Aorta (tissue), 5 donors: ENCODE measurements at regions of chr12 and their contacts with region 1.

Region 1: DNA sequence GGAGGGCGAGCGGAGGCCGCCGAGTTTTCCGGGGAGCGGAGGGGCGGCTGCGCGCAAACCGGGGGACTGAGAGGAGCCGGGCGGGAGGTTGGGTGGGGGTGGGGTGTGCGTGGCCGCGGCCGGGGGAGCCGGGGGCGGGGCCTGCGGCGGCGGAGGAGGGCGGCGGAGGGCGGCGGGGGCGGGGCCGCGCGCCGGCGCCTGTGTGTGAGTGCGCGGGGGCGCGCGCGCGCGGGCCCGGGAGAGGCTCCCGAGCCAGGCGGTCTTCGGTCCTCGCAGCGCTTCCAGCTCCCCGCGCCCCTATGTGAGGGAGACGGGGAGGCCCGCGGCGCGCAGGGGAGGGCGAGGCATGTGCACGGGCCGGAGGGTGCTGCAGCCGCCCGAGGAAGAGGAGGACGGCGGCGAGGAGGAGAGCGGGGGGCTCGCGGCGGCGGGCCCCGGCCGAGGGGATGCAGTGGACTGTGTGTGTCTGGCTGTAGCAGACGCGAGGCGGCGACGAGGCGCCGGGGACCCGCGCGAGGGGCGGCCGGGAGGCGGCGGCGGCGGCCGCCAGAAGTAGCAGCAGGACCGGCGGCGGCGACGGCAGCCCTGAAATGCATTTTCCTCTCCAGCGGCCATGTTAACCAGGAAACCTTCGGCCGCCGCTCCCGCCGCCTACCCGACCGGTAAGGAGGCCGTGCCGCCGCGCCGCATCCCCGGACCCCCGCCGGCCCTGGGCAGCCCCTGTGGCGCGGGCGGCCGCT is at the start of gene DYRK2:
- DNase-seq: peak; percentile 89 to 92
- ATAC-seq: peak; percentile 86
- H3K4me3 ChIP-seq: peak within 1 kb of the TSS; percentile 89 to 98
- H3K27ac ChIP-seq: peak within 1 kb of the TSS; percentile 69 to 93
- H3K4me1 ChIP-seq: no peaks in the 10 kb centered on the region
- H3K27me3 ChIP-seq: no peaks in the 10 kb centered on the region
- total RNA-seq, gene DYRK2: 26.7 to 42.5 TPM

Region 2: DNA sequence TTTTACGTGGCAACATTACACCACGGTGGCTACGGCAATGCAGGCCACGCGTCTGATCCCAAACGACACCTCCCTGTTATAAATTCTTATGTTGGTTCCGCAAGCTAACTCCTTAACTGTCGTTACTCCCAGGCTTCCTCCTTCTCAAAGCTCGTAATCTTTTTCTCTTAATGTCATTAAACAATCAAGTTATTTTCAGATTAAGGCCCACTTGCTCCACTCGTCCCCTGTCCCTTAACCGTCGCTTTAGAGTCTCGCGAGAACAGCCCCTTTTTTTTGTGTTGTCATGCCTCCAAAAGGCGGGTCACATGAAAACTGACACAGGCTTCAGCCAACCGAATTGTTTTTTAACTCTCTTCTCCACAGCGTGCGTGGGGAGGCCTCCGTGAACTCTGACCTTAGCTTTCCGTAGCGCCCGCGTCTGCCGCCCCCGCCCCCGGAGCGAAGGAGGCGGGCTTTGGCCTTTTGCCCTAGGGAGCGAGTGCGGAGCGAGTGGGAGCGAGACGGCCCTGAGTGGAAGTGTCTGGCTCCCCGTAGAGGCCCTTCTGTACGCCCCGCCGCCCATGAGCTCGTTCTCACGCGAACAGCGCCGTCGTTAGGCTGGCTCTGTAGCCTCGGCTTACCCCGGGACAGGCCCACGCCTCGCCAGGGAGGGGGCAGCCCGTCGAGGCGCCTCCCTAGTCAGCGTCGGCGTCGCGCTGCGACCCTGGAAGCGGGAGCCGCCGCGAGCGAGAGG is 379.6 kb before region 1 on chr12 and contains the start of gene CAND1:
- intact Hi-C with region 1: loop called (anchors 5 to 10 kb)
- DNase-seq: peak; percentile 98
- ATAC-seq: peak; percentile 97
- H3K4me3 ChIP-seq: peak within 1 kb of the TSS; percentile 64 to 91
- H3K27ac ChIP-seq: peak within 1 kb of the TSS; percentile 83 to 95
- H3K4me1 ChIP-seq: peaks cover 0 to 3% of the 10 kb centered on the region in 2 donors
- H3K27me3 ChIP-seq: no peaks in the 10 kb centered on the region
- total RNA-seq, gene CAND1: 88.7 to 113 TPM

Region 3: DNA sequence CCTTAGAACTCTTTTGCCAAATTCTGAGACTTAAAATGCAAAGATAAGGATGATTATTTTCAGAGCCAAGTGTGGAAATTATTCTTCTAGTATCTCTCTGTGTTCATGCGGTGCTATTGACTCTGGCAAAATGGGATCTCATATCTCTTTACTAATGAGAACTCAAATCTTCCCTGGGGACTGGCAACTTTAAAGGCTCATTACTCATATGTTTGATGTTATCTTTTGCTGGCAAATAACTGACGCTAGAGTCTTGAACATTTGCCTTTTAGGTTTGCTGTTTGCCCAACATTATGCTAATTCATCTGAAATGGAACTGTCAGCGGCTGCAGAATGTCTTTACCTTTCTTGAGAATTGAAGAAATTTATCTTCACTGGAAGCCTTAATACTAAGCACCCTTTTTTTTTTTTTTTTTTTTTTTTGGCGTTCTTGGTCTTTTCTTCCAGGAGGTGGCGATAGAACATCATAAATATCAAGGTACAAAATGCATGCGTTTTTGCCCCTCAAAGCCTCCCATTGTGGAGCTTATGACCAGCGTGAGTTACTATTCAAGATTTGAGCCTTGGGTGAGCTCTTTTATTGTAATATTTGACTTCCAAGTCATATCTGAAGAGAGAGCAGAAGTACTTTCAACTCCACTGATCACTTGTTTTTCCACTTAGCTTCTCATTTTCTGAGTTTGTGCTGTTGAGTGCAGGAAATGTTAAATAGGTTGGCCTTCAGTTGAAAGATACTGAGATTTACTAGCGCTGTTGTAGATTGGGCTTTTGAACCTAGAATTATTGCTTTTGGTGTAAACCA is 292.9 kb before region 1 on chr12:
- intact Hi-C with region 1: loop called in 1 of 2 experiments (anchors 5 kb)
- DNase-seq: no peak
- ATAC-seq: peak; percentile 80
- H3K4me3 ChIP-seq: no peak overlapping the region
- H3K27ac ChIP-seq: no peak overlapping the region
- H3K4me1 ChIP-seq: peaks cover 0 to 3% of the 10 kb centered on the region in 2 donors
- H3K27me3 ChIP-seq: no peaks in the 10 kb centered on the region

Region 4: DNA sequence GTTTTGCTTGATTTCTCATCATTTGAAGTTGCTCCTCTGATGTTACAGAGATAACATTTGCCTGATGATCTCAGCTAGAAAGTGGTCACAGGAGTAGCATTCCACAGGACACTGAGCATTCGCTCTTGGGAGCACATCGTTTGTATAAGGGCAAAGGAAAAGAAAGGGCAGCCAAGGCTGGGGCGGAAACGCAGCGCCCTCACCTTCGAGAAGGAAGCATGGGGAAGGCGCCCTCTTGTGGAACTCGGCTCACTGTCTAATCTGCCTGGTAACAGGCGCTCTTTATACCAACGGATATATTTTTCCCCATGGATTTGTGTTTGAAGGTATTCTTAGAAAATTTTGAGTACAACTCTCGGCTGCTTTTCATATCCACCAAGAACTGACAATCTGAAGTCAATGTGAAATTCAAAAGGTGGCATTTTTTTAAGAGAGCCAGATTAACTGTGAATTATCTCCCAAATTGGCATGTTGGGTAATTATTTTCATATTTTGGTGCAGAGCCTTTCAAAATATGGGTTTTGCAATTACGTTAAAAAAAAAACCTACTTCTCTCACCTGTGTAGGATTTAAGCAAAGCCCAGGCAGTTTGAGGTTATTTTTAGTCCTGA is 206.8 kb before region 1 on chr12:
- intact Hi-C with region 1: loop called in 1 of 2 experiments (anchors 10 kb)
- DNase-seq: peak; percentile 89 to 95
- ATAC-seq: peak; percentile 90
- H3K4me3 ChIP-seq: no peak overlapping the region
- H3K27ac ChIP-seq: no peak overlapping the region
- H3K4me1 ChIP-seq: no peaks in the 10 kb centered on the region
- H3K27me3 ChIP-seq: no peaks in the 10 kb centered on the region

Region 5: DNA sequence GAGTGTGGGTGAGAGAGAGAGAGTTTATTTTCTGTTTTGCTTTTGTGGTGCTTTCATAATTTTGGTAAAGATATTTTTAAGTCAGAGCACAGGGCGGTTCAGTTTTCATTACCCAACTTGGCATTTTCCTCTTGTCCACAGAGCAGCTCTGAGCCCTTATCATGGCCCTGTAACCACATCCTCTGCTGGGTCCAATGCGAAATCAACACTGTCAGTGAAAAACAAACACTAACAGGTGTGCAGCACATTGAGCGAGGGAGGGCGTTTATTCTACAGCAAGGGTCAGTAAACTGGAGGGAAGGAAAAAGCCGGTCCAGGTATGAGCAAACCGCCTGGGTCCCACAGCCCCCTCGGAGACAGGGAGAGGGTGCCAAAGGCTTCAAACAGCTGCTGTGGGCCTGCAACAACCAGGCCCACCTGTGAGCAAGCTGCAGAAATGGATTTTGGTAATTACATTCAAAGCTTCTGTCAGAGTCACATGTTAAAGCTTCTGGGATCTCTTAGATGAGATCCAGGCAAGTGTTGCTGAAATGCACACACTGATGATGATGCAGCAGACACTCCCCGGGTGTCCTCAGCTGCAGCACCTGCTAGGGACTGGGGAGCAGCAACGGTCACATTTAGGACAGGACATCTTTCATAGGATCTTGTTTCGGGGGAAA is 132.9 kb before region 1 on chr12:
- intact Hi-C with region 1: loop called in 1 of 2 experiments (anchors 10 kb)
- DNase-seq: no peak
- ATAC-seq: no peak
- H3K4me3 ChIP-seq: no peak overlapping the region
- H3K27ac ChIP-seq: no peak overlapping the region
- H3K4me1 ChIP-seq: peaks cover 0 to 7% of the 10 kb centered on the region in 2 donors
- H3K27me3 ChIP-seq: no peaks in the 10 kb centered on the region

Region 6: DNA sequence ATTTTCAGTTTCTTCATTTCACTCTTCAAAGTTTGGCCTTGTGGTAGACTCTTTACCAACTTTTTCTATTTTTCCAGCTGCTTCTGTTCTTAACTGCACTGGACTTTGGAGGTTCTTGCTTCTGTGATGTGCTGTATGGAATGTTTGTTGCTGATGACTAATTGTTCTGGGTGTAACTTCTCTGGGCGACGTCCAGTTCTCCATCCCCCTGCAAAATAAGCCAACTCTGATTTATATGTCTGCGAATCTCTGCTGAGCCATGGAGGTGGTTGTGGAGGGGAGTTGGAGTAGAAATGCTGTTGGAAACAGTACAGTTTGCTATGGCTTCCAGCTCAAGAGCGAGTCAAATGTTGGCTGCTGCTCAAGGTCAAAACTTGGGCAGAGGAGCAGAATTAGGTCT is 114.0 kb before region 1 on chr12:
- intact Hi-C with region 1: no loop called
- DNase-seq: peak in 1 of 2 donors; percentile 59
- ATAC-seq: peak; percentile 45
- H3K4me3 ChIP-seq: no peak overlapping the region
- H3K27ac ChIP-seq: no peak overlapping the region
- H3K4me1 ChIP-seq: peaks cover 0 to 3% of the 10 kb centered on the region in 2 donors
- H3K27me3 ChIP-seq: no peaks in the 10 kb centered on the region

Region 7: GRCh38 chr12:67758119-67758518 is 109.4 kb after region 1 on chr12:
- intact Hi-C with region 1: no loop called
- DNase-seq: no peak
- ATAC-seq: no peak
- H3K4me3 ChIP-seq: no peak overlapping the region
- H3K27ac ChIP-seq: no peak overlapping the region
- H3K4me1 ChIP-seq: peaks cover 0 to 3% of the 10 kb centered on the region in 2 donors
- H3K27me3 ChIP-seq: no peaks in the 10 kb centered on the region

Region 8: GRCh38 chr12:67827820-67828383 is 179.2 kb after region 1 on chr12:
- intact Hi-C with region 1: loop called (anchors 5 to 10 kb)
- DNase-seq: peak in 1 of 2 donors; percentile 50
- ATAC-seq: peak; percentile 90
- H3K4me3 ChIP-seq: peak overlapping the region; percentile 64 to 97
- H3K27ac ChIP-seq: peak overlapping the region; percentile 96 to 100
- H3K4me1 ChIP-seq: peaks cover 1 to 6% of the 10 kb centered on the region in 2 donors
- H3K27me3 ChIP-seq: no peaks in the 10 kb centered on the region

Region 9: GRCh38 chr12:67937836-67938235 is 289.1 kb after region 1 on chr12:
- intact Hi-C with region 1: loop called (anchors 10 kb)
- DNase-seq: no peak
- ATAC-seq: no peak
- H3K4me3 ChIP-seq: no peak overlapping the region
- H3K27ac ChIP-seq: no peak overlapping the region
- H3K4me1 ChIP-seq: no peaks in the 10 kb centered on the region
- H3K27me3 ChIP-seq: no peaks in the 10 kb centered on the region